Activated CD4-positive, alpha-beta memory T cell treated with anti-CD3 and anti-CD28 coated beads, Interleukin-2, amount 10 ng/mL, durations not matched to agents 7 days and 5 days (primary cell): ENCODE measurements at regions of chr12 and their contacts with region 1.

Region 1: DNA sequence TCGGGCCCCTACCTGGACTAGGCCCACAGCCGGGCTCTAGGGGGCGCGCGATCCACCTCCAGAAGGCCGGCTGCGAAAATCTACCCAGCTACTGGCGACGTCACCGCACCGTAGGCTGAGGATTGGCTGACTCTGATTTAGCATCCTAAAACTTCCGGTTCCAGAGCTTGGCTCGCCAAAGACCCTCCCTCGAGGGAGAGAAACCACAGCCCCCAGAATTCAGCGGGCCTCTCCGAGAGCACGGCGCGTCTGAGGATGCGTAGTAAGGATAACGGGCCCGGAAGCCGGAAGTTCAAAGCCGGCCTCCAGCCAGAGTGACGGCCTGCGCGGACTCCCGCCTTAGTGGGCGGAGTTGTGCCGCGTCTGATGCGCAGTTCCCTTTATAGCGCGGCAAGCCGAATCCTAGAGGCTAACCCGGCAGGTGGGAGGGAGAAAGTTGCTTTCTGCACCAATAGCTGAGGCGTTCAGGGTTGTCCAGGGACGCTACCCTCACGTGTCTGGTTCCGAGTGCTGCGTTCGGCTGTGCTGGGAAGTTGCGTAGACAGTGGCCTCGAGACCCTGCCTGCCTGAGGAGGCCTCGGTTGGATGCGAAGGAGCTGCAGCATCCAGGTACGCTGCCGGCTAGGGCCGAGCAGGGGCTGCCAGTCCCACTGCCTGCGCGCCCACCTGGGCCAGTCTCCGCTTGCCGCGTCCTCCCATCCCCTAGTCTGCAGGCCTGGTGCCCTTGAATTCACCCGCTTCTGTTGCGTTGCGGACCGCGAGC is at the start of gene COX14:
- DNase-seq: peak; percentile 99
- H3K4me3 Mint-ChIP-seq: peak within 1 kb of the TSS; percentile 93
- H3K27ac Mint-ChIP-seq: peak within 1 kb of the TSS; percentile 96
- H3K4me1 Mint-ChIP-seq: peaks cover 44% of the 10 kb centered on the region
- H3K27me3 Mint-ChIP-seq: no peaks in the 10 kb centered on the region
- total RNA-seq, gene COX14: 53.5 to 55.3 TPM

Region 2: GRCh38 chr12:50084775-50085614 is 26.9 kb before region 1 on chr12 and contains the start of gene SMARCD1:
- CTCF ChIA-PET with region 1: interaction called, 181 read pairs
- POLR2A ChIA-PET with region 1: interaction called, 48 read pairs
- DNase-seq: peak; percentile 83
- H3K4me3 Mint-ChIP-seq: peak within 1 kb of the TSS; percentile 88
- H3K27ac Mint-ChIP-seq: peak within 1 kb of the TSS; percentile 88
- H3K4me1 Mint-ChIP-seq: peaks cover 41% of the 10 kb centered on the region
- H3K27me3 Mint-ChIP-seq: no peaks in the 10 kb centered on the region
- total RNA-seq, gene SMARCD1: 57.3 to 63.3 TPM

Region 3: GRCh38 chr12:50145439-50145838 is 33.6 kb after region 1 on chr12:
- CTCF ChIA-PET with region 1: interaction called, 11 read pairs
- POLR2A ChIA-PET with region 1: interaction called, 4 read pairs
- DNase-seq: no peak
- H3K4me3 Mint-ChIP-seq: no peak overlapping the region
- H3K27ac Mint-ChIP-seq: no peak overlapping the region
- H3K4me1 Mint-ChIP-seq: peaks cover 11% of the 10 kb centered on the region
- H3K27me3 Mint-ChIP-seq: no peaks in the 10 kb centered on the region

Region 4: GRCh38 chr12:50174971-50175715 is 63.3 kb after region 1 on chr12:
- CTCF ChIA-PET with region 1: interaction called, 66 read pairs
- POLR2A ChIA-PET with region 1: interaction called, 60 read pairs
- DNase-seq: no peak
- H3K4me3 Mint-ChIP-seq: no peak overlapping the region
- H3K27ac Mint-ChIP-seq: no peak overlapping the region
- H3K4me1 Mint-ChIP-seq: peaks cover 2% of the 10 kb centered on the region
- H3K27me3 Mint-ChIP-seq: no peaks in the 10 kb centered on the region

Region 5: GRCh38 chr12:50222275-50222795 is 110.5 kb after region 1 on chr12:
- CTCF ChIA-PET with region 1: interaction called, 18 read pairs
- POLR2A ChIA-PET with region 1: interaction called, 25 read pairs
- DNase-seq: peak; percentile 38
- H3K4me3 Mint-ChIP-seq: no peak overlapping the region
- H3K27ac Mint-ChIP-seq: no peak overlapping the region
- H3K4me1 Mint-ChIP-seq: peaks cover 40% of the 10 kb centered on the region
- H3K27me3 Mint-ChIP-seq: no peaks in the 10 kb centered on the region

Region 6: DNA sequence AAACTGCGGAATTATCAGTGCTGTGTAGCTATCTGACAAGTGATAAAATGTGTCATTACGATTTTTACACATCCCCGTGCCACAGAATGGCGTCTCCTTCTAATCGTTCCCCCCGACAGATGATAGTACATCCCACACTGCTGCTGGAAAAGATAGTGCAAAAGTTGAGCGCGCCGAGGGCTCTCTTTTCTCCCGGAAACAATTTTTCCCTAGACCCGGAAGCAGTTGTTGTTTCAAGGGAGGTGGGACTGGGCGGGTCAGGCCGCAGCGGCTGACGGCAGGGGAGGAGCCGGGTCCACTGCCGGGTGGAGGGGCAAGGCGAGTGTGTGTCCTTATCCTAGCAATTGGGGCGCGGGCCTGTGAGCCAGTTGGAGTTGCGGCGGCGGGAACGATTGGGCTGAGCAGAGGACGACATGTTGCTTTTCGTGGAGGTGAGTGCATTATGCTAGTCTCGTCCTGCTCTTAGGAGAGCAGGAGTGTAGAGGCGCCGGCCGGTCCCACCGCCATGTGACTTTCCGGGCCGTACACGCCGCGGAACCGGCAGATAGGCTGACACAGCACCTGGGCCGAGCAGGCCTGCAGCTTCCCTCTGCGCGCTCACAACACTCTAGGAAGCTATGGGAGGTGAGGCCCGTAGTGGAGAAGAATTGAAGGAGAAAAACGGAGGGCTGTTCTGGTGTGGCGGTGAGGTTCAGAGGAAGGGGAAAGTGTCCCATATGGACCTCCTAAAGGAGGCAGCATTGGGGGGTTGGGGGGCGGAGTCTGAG is 288.9 kb after region 1 on chr12 and contains the start of gene LARP4:
- CTCF ChIA-PET with region 1: interaction called, 22 read pairs
- POLR2A ChIA-PET with region 1: interaction called, 12 read pairs
- DNase-seq: peak; percentile 93
- H3K4me3 Mint-ChIP-seq: peak within 1 kb of the TSS; percentile 92
- H3K27ac Mint-ChIP-seq: peak within 1 kb of the TSS; percentile 91
- H3K4me1 Mint-ChIP-seq: peaks cover 30% of the 10 kb centered on the region
- H3K27me3 Mint-ChIP-seq: no peaks in the 10 kb centered on the region
- total RNA-seq, gene LARP4: 43.1 to 45.8 TPM

Region 7: DNA sequence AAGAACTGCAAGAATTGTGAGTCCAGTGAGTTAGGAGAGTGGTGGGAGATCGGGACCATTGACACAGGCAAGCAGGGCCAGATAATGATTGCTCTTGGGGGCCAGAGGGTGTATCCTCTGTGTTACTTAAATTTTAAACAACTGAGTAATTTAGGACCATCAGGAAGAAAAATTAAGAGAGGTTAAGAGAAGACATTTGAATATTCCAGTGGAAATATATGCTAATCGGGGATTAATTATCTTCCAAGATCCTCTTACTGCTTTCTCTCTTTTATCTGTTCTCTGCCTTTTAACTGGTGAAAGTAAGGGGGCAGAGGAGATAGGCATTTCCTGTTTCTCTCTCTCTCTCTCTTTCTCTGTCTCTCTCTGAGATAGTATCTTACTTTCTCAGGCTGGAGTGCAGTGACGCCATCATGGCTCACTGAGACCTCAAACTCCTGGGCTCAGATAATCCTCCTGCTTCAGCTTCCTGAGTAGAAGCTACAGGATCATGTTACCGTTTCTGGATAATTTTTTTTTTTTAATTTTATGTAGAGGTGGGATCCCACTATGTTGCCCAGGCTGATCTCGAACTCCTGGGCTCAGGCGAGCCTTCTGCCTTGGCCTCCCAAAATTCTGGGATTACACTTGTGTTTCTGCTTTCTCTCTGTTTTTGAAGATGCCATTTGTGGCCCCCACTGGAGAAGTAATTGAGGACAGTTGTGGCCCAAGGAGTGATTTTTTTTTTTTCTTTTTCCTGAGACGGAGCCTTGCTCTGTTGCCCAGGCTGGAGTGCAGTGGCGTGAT is 478.0 kb after region 1 on chr12:
- CTCF ChIA-PET with region 1: no interaction called
- POLR2A ChIA-PET with region 1: no interaction called
- DNase-seq: peak; percentile 23
- H3K4me3 Mint-ChIP-seq: peak overlapping the region; percentile 22
- H3K27ac Mint-ChIP-seq: no peak overlapping the region
- H3K4me1 Mint-ChIP-seq: peaks cover 13% of the 10 kb centered on the region
- H3K27me3 Mint-ChIP-seq: no peaks in the 10 kb centered on the region